ENCODE measurements at regions of chr11 and their contacts with region 1.

Region 1: DNA sequence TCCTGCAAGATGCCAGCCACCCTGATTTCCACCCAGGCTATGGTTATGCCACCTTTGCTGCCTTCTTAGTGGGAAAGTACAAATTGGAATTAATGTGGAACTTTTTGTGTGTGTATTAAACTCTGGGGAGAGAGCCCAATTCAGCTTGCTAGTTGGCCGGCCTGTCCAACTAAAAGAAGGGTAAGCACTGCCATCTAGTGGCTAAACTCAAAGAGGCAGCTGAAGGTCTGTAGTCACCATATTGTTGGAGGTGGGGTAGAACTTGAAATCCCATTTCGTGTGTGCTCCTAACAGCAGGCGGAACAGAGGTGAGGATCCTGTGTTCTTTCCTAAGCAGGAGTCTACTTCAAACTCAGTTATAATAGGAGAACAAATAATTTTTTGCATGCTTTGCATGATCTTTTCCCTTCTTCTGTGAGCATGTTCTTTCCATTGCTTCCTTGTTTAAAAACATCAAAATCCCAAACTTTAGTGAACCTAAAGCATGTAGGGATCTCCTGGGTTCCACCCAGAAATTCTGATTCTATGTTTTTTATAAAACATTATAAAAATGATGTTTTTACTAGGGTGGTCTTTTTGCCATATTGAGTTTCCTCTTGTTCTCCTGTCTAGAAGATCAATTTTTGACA is 138.8 kb upstream of the SORL1-AS1 start:
- DNase-seq: peak; percentile 42 to 88 (median 62)
- ATAC-seq: peak; percentile 91
- H3K4me3 ChIP-seq: no peak overlapping the region
- H3K4me3 Mint-ChIP-seq: no peak overlapping the region
- H3K27ac ChIP-seq: no peak overlapping the region
- H3K27ac Mint-ChIP-seq: peak overlapping the region; percentile 71
- H3K4me1 ChIP-seq: peaks cover 5% of the 10 kb centered on the region
- H3K4me1 Mint-ChIP-seq: peaks cover 10% of the 10 kb centered on the region
- H3K27me3 ChIP-seq: no peaks in the 10 kb centered on the region
- H3K27me3 Mint-ChIP-seq: no peaks in the 10 kb centered on the region
- CTCF ChIP-seq: peak; percentile 84

Region 2: DNA sequence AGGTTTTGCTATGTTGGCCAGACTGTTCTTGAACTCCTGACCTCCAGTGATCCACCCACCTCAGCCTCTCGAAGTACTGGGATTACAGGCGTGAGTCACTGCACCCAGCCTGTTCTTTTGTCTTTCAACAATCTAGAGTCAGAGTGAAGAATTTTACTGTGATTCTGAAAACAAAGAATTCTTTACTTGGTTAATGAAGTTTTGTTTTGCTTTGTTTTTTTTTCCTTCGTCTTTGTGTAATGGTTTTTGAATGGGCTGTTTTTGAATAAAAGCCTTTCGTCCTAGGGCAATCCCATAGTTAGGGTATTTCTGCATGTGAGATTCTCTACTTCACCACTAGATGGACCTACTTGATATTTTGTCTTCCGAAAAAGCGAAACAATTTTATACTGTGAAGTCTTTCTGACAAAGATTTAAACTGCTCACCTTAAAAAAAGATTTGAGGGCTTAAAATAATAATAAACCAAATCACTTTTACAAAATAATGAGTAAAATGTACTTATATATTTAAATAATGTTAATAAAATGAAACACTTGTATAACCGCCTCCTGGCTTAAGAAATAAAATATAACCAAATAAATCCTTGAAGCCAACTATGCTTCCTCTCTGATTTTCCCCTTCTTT is 342.4 kb before region 1 on chr11:
- CTCF ChIA-PET with region 1: interaction called, 10 read pairs
- POLR2A ChIA-PET with region 1: no interaction called
- intact Hi-C with region 1: loop called (anchors 1 to 2 kb)
- DNase-seq: peak in 4 of 14 experiments; percentile 5 to 63 (median 52)
- ATAC-seq: peak; percentile 78
- H3K4me3 ChIP-seq: no peak overlapping the region
- H3K4me3 Mint-ChIP-seq: no peak overlapping the region
- H3K27ac ChIP-seq: no peak overlapping the region
- H3K27ac Mint-ChIP-seq: no peak overlapping the region
- H3K4me1 ChIP-seq: no peaks in the 10 kb centered on the region
- H3K4me1 Mint-ChIP-seq: peaks cover 5% of the 10 kb centered on the region
- H3K27me3 ChIP-seq: no peaks in the 10 kb centered on the region
- H3K27me3 Mint-ChIP-seq: no peaks in the 10 kb centered on the region
- CTCF ChIP-seq: peak; percentile 77

Region 3: GRCh38 chr11:121341609-121342008 is 249.9 kb before region 1 on chr11:
- CTCF ChIA-PET with region 1: no interaction called
- POLR2A ChIA-PET with region 1: no interaction called
- intact Hi-C with region 1: no loop called
- DNase-seq: no peak
- ATAC-seq: no peak
- H3K4me3 ChIP-seq: no peak overlapping the region
- H3K4me3 Mint-ChIP-seq: no peak overlapping the region
- H3K27ac ChIP-seq: no peak overlapping the region
- H3K27ac Mint-ChIP-seq: no peak overlapping the region
- H3K4me1 ChIP-seq: no peaks in the 10 kb centered on the region
- H3K4me1 Mint-ChIP-seq: no peaks in the 10 kb centered on the region
- H3K27me3 ChIP-seq: no peaks in the 10 kb centered on the region
- H3K27me3 Mint-ChIP-seq: no peaks in the 10 kb centered on the region
- CTCF ChIP-seq: no peak

Measured in CD4-positive, alpha-beta T cell (primary cell).